Activated CD8-positive, alpha-beta T cell treated with anti-CD3 and anti-CD28 coated beads, Interleukin-2, amount 10 ng/mL, durations not matched to agents 7 days and 5 days (primary cell): ENCODE measurements at regions of chr2 and their contacts with region 1.

Region 1: GRCh38 chr2:74482801-74483674 is at the starts of genes CCDC142 and TTC31:
- DNase-seq: peak; percentile 97
- ATAC-seq: peak; percentile 95
- H3K4me3 Mint-ChIP-seq: peak within 1 kb of the TSS; percentile 100
- H3K27ac Mint-ChIP-seq: peak within 1 kb of the TSS; percentile 100
- H3K4me1 Mint-ChIP-seq: peaks cover 41% of the 10 kb centered on the region
- H3K27me3 Mint-ChIP-seq: no peaks in the 10 kb centered on the region
- total RNA-seq, gene CCDC142: 22.5 to 26.7 TPM
- total RNA-seq, gene TTC31: 38.3 to 40.0 TPM

Region 2: DNA sequence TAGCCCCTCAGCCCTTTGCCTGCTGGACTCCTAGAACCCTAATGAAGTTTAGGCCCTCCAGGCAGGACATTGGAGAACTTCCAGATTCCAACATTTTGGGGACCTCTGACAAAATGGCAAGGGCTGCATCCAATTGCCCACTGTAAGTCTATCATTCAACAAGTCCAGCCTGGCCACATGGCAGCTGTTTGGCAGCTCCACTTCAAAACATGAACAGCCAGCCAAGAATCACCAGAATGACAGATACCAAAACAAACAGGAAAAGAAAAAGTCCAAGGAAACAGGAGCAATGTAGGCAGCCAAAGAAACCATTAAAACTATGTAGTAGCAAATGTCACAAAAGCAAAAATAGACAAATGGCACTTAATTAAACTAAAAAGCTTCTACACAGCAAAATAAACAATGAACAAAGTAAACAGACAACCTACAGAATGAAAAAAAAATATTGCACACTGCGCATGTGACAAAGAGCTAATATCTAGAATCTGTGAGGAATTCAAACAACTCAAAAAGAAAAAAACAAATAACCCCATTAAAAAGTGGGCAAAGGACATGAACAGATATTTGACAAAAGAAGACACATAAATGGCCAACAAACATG is 165.2 kb before region 1 on chr2:
- CTCF ChIA-PET with region 1: no interaction called
- POLR2A ChIA-PET with region 1: no interaction called
- DNase-seq: no peak
- ATAC-seq: no peak
- H3K4me3 Mint-ChIP-seq: no peak overlapping the region
- H3K27ac Mint-ChIP-seq: no peak overlapping the region
- H3K4me1 Mint-ChIP-seq: no peaks in the 10 kb centered on the region
- H3K27me3 Mint-ChIP-seq: peaks cover 2% of the 10 kb centered on the region

Region 3: GRCh38 chr2:74458132-74458925 is 24.7 kb before region 1 on chr2 and contains the start of gene WBP1:
- CTCF ChIA-PET with region 1: interaction called, 29 read pairs
- POLR2A ChIA-PET with region 1: interaction called, 33 read pairs
- DNase-seq: peak; percentile 100
- ATAC-seq: peak; percentile 91
- H3K4me3 Mint-ChIP-seq: peak within 1 kb of the TSS; percentile 99
- H3K27ac Mint-ChIP-seq: peak within 1 kb of the TSS; percentile 98
- H3K4me1 Mint-ChIP-seq: peaks cover 59% of the 10 kb centered on the region
- H3K27me3 Mint-ChIP-seq: no peaks in the 10 kb centered on the region
- total RNA-seq, gene WBP1: 34.0 to 34.3 TPM

Region 4: DNA sequence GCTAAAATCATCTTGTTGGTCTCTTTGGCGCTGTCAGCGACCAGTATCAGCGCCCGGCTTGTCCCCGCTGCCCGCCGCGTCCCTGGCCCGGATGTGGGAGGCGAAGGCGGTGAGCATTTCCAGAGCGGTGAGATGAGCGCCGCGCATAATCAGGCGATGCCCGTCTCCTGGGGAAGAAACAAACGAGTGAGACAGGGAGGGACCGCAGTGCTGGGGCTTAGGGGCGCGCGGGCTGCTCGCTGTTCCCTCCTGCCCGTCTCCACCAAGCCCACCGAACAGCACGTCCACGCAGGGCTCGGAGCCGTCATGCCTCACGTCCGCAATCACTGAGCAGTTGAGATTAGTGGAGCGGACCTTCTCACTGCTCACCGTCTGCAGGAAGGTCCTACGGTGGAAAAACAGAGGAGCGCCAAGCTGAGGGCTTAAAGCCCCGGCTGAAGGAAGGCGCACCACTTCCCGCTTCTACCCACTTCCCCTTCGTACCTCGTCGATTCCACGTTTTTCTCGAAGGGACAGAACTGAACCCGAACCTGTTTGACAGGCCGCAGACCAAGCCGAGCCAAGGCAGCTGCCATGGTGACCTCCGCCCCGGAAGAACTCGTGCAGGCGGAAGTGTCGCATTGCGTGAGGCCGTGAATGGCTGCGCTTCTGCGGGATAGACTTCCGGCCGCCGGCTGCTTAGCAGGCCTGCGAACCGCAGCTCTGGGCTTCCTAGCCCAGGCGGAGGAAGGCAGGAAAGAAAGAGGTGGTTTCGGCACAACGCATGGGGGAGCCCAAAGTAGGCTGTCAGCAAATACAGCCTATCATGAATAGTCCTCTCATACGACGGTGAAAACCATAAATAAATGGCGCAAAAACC is 10.7 kb before region 1 on chr2 and contains the start of gene MRPL53:
- CTCF ChIA-PET with region 1: interaction called, 26 read pairs
- POLR2A ChIA-PET with region 1: interaction called, 39 read pairs
- DNase-seq: peak; percentile 97
- ATAC-seq: peak; percentile 95
- H3K4me3 Mint-ChIP-seq: peak within 1 kb of the TSS; percentile 98
- H3K27ac Mint-ChIP-seq: peak within 1 kb of the TSS; percentile 99
- H3K4me1 Mint-ChIP-seq: peaks cover 33% of the 10 kb centered on the region
- H3K27me3 Mint-ChIP-seq: no peaks in the 10 kb centered on the region
- total RNA-seq, gene MRPL53: 95.7 to 96.2 TPM

Region 5: GRCh38 chr2:74507145-74507925 is 24.3 kb after region 1 on chr2 and contains the start of gene PCGF1:
- CTCF ChIA-PET with region 1: interaction called, 11 read pairs
- POLR2A ChIA-PET with region 1: interaction called, 4 read pairs
- DNase-seq: peak; percentile 99
- ATAC-seq: peak; percentile 90
- H3K4me3 Mint-ChIP-seq: peak within 1 kb of the TSS; percentile 100
- H3K27ac Mint-ChIP-seq: peak within 1 kb of the TSS; percentile 100
- H3K4me1 Mint-ChIP-seq: peaks cover 55% of the 10 kb centered on the region
- H3K27me3 Mint-ChIP-seq: peaks cover 35% of the 10 kb centered on the region
- total RNA-seq, gene PCGF1: 20.3 to 28.5 TPM

Region 6: GRCh38 chr2:74529357-74530238 is 46.6 kb after region 1 on chr2 and contains the starts of genes AUP1 and HTRA2:
- CTCF ChIA-PET with region 1: interaction called, 76 read pairs
- POLR2A ChIA-PET with region 1: interaction called, 33 read pairs
- DNase-seq: peak; percentile 97
- ATAC-seq: peak; percentile 92
- H3K4me3 Mint-ChIP-seq: peak within 1 kb of the TSS; percentile 95
- H3K27ac Mint-ChIP-seq: peak within 1 kb of the TSS; percentile 93
- H3K4me1 Mint-ChIP-seq: peaks cover 50% of the 10 kb centered on the region
- H3K27me3 Mint-ChIP-seq: no peaks in the 10 kb centered on the region
- total RNA-seq, gene AUP1: 119 to 123 TPM
- total RNA-seq, gene HTRA2: 48.0 to 49.4 TPM